PC-3 (cell line): ENCODE measurements at regions of chr19 and their contacts with region 1.

Region 1: DNA sequence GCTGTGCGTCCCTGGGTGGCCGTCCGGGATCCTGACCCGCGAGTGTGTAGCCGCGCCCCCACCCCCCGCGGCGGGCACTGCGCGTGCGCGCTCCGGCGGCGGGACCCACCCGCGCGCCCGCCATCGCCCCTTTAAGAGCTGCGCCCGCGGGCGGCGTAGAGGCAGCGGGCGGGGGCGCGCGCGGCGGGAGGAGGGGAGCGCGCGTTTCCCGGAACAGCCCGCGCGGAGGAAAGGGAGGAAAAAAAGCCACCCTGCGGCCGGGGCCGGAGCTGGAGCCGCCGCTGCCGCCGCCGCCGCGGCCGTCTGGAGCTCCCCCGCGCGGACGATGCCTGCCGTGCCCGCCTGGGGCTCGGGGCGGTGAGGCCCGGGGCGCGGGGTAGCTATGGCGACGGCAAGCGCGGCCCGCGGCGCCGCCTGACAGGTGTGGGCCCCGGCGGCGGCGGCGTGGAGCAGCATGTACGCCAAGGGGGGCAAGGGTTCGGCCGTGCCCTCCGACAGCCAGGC is at the start of gene SSBP4:
- DNase-seq: peak; percentile 85
- ATAC-seq: peak; percentile 22
- H3K4me3 ChIP-seq: peak within 1 kb of the TSS; percentile 91
- H3K27ac ChIP-seq: no peak within 1 kb of the TSS
- H3K4me1 ChIP-seq: peaks cover 37% of the 10 kb centered on the region
- H3K27me3 ChIP-seq: no peaks in the 10 kb centered on the region
- CTCF ChIP-seq: no peak
- total RNA-seq, gene SSBP4: 97.5 and 99.9 TPM in 2 replicates

Region 2: GRCh38 chr19:18340190-18340989 is 78.9 kb before region 1 on chr19 and contains the start of gene PGPEP1:
- CTCF ChIA-PET with region 1: interaction called, 15 read pairs
- POLR2A ChIA-PET with region 1: no interaction called
- intact Hi-C with region 1: no loop called
- DNase-seq: peak; percentile 67
- ATAC-seq: peak; percentile 76
- H3K4me3 ChIP-seq: peak within 1 kb of the TSS; percentile 85
- H3K27ac ChIP-seq: no peak within 1 kb of the TSS
- H3K4me1 ChIP-seq: peaks cover 24% of the 10 kb centered on the region
- H3K27me3 ChIP-seq: no peaks in the 10 kb centered on the region
- CTCF ChIP-seq: no peak
- total RNA-seq, gene PGPEP1: 9.6 and 11.4 TPM in 2 replicates

Region 3: DNA sequence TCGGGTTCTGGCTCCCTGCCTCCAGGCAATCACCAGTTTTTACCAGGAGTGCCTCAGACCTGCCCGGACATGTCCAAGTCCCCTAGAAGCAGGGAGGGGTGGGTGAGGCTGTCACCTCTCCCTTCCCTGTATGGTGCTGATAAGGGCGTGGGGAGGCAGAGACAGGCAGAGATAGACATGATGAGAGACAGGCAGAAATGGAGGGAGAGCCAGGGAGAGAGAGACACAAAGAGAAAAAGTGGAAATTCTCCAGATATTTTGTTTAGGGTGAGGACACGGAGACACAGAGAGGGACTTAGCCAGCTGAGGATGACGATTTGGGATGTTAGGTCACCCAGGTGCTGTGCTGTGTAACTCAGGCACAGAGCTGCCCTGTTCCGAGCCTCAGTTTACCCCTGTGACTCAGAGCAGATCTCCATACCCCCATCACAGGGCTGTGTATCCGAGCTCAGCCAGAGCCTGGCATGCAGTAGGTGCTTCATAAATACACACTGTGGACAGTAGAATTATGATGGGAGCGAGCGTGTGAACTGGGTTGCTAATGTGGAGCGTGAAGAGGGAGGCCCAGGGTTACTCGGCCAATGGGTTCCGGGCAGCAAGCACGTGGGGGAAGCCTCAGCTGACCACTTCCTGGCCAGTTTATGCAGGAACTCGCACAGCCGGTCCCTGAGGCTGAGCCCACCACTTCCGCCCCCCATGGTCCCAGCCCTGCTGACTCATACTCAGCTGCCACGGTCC is 45.2 kb before region 1 on chr19:
- CTCF ChIA-PET with region 1: no interaction called
- POLR2A ChIA-PET with region 1: no interaction called
- intact Hi-C with region 1: loop called (anchors 1 kb)
- DNase-seq: peak; percentile 90
- ATAC-seq: peak; percentile 93
- H3K4me3 ChIP-seq: no peak overlapping the region
- H3K27ac ChIP-seq: peak overlapping the region; percentile 76
- H3K4me1 ChIP-seq: peaks cover 38% of the 10 kb centered on the region
- H3K27me3 ChIP-seq: no peaks in the 10 kb centered on the region
- CTCF ChIP-seq: no peak

Region 4: GRCh38 chr19:18469069-18469846 is 50.0 kb after region 1 on chr19:
- CTCF ChIA-PET with region 1: no interaction called
- POLR2A ChIA-PET with region 1: no interaction called
- intact Hi-C with region 1: no loop called
- DNase-seq: peak; percentile 56
- ATAC-seq: peak; percentile 39
- H3K4me3 ChIP-seq: no peak overlapping the region
- H3K27ac ChIP-seq: no peak overlapping the region
- H3K4me1 ChIP-seq: peaks cover 20% of the 10 kb centered on the region
- H3K27me3 ChIP-seq: no peaks in the 10 kb centered on the region
- CTCF ChIP-seq: peak; percentile 87

Region 5: GRCh38 chr19:18725841-18726770 is 306.9 kb after region 1 on chr19:
- CTCF ChIA-PET with region 1: no interaction called
- POLR2A ChIA-PET with region 1: no interaction called
- intact Hi-C with region 1: no loop called
- DNase-seq: no peak
- ATAC-seq: no peak
- H3K4me3 ChIP-seq: no peak overlapping the region
- H3K27ac ChIP-seq: no peak overlapping the region
- H3K4me1 ChIP-seq: no peaks in the 10 kb centered on the region
- H3K27me3 ChIP-seq: no peaks in the 10 kb centered on the region
- CTCF ChIP-seq: no peak